ENCODE measurements at regions of chr6 and their contacts with region 1.

Region 1: GRCh38 chr6:31834434-31835198 is 7.1 kb downstream of the HSPA1B start:
- DNase-seq: peak; percentile 85
- ATAC-seq: peak; percentile 75
- H3K4me3 ChIP-seq: peak overlapping the region; percentile 97
- H3K27ac ChIP-seq: peak overlapping the region; percentile 79
- H3K4me1 ChIP-seq: peaks cover 26% of the 10 kb centered on the region
- H3K27me3 ChIP-seq: no peaks in the 10 kb centered on the region
- CTCF ChIP-seq: no peak

Region 2: DNA sequence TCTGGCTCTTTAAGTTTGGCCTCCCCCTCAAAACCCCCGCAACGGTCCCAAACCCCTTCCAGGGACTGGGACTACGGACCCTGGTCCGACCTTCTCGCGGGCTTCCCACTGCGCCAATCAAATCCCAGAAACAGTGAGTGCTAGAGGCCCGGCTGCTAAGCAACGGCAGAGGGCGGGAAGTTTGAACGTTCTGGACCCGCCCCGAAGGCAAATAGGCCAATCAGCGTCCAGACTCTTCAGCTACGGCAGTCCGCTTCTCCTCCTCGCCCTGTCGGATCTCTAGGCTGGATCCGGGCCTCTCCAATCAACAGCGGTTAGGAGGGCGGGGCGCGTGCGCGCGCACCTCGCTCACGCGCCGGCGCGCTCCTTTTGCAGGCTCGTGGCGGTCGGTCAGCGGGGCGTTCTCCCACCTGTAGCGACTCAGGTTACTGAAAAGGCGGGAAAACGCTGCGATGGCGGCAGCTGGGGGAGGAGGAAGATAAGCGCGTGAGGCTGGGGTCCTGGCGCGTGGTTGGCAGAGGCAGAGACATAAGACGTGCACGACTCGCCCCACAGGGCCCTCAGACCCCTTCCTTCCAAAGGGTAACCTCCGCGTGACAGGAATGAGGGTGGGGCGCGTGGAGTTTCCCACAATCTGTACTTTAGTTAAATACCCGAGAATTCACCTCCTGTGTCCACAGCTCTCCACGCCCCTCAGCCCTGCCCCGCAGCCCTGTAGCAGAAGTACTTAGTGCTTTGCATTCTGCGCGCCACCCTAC is 94.8 kb before region 1 on chr6 and contains the start of gene MSH5:
- CTCF ChIA-PET with region 1: interaction called, 6 read pairs
- POLR2A ChIA-PET with region 1: no interaction called
- intact Hi-C with region 1: loop called (anchors 5 kb)
- DNase-seq: peak; percentile 99
- ATAC-seq: peak; percentile 77
- H3K4me3 ChIP-seq: peak within 1 kb of the TSS; percentile 79
- H3K27ac ChIP-seq: peak within 1 kb of the TSS; percentile 87
- H3K4me1 ChIP-seq: peaks cover 42% of the 10 kb centered on the region
- H3K27me3 ChIP-seq: no peaks in the 10 kb centered on the region
- CTCF ChIP-seq: no peak
- total RNA-seq, gene MSH5: 22.7 and 23.0 TPM in 2 replicates

Region 3: DNA sequence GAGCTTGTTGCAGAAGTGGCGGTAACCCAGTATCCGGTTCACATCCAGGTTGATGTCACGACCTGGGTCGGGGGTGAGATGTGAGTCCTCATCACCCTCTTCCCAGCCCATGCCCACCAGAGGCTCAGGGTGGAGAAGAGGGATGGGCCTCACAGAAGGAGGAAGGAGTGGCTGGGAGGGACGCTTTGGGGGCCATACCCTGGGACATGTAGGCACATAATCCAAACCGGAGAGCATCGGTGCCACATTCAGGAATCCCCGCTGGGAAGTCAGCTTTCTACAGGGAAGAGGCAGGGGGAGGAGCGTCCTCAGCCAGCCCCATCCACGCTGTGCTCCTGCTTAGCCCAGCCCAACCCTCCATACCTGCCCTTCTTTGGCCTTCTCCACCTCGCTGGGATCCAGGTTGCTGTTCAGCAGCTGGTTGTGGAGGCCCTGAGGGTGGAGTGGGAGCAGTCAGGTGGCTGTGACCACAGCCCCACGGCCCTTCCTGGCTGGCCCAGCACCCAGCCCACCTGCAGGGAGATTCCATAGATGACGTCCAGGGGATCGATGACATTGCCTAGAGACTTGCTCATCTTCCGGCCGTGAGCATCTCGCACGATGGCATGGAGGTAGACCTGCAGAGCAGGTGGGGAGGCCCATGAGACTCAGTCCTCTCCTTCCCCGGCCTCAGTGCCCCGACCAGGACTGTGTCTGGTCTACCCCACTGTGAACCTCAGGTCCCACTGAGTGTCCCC is 53.9 kb before region 1 on chr6:
- CTCF ChIA-PET with region 1: no interaction called
- POLR2A ChIA-PET with region 1: no interaction called
- intact Hi-C with region 1: no loop called
- DNase-seq: no peak
- ATAC-seq: no peak
- H3K4me3 ChIP-seq: no peak overlapping the region
- H3K27ac ChIP-seq: no peak overlapping the region
- H3K4me1 ChIP-seq: peaks cover 22% of the 10 kb centered on the region
- H3K27me3 ChIP-seq: no peaks in the 10 kb centered on the region
- CTCF ChIP-seq: no peak

Region 4: DNA sequence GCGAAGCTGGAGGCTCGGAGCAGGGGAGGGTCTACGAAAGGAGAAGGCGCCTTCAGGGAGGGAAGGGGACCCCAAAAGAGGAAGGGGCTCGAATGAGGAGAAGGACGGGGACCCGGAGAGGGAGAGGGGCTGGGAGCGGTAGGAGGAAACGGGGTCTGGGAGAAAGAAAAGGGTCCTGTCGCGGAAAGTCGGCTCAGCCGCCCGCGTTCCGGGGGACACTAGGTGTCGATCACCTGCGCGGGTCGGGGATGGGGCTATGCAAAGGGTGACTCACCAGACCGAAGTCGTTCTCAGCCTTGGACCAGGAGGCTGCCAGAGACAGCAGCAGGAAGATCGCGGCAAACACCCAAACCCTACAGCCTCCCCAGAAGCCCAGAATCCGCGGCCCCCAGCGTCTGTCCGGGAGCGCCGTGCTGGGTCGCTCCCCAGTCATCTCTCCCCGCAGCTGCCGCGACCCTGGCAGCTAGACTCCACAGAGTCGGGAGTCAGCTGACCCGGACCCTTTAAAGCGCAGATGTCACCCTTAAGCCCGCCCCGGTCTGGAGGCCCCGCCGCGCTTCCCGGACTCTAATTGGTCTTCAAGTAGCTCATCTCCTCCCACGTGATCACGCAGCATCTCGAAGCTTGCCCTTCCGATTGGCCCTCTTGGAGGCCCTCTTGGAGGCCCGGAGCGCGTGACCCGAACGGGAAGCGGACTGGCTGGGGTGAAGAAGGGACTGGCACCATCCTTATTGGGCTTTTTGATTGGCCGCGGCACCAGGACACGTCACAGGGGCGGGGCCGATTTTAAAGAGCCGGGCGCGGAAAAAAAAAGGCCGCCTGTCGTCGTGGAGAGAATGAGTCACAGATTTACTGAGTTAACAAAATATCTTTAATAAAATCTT is 28.0 kb after region 1 on chr6 and contains the start of gene NEU1:
- CTCF ChIA-PET with region 1: interaction called, 3 read pairs
- POLR2A ChIA-PET with region 1: interaction called, 4 read pairs
- intact Hi-C with region 1: loop called (anchors 1 kb)
- DNase-seq: peak; percentile 100
- ATAC-seq: peak; percentile 96
- H3K4me3 ChIP-seq: peak within 1 kb of the TSS; percentile 79
- H3K27ac ChIP-seq: peak within 1 kb of the TSS; percentile 77
- H3K4me1 ChIP-seq: peaks cover 5% of the 10 kb centered on the region; the same call in 1 of the 2 replicates
- H3K27me3 ChIP-seq: no peaks in the 10 kb centered on the region
- CTCF ChIP-seq: no peak
- total RNA-seq, gene NEU1: 31.7 and 33.1 TPM in 2 replicates